Spleen (tissue), 13 donors: ENCODE measurements at regions of chr2 and their contacts with region 1.

Region 1: DNA sequence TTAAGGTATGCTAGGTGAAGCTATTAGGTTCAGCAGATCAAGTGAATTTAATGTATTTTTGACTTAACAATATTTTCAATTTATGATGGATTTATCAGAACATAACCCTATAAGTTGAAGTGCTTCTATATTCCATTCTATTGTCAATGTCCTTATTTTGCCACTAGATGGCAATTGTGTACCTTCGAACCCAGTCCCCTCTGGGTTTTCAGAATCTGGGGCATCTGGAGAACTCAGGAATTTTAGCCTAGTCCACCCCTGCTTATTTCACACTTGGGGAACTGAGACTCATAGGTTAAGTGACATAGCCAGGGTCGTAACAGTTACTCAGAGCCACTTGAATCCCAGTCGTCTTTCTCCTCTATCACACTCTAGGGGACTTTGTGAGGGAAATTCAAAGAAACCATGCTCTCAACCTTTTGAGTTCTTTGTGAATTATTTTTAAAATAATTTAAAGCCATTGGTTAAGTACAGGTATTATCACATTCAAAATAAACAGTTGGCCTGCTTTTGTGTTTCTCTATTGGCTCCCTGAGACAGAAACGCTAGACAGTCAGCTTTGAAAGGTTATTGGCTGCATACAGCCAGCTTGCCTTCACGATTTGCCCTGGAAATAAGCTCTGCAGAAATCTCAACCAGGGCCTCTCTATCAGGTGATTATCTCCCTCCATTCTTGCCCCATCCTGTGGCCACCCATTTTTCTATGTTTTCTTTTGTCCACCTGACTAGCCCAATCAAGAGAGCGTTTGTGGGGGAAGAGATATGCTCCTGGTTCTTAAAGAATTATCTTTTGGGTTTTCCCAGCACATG is 145.0 kb downstream of the TTC27 start:
- DNase-seq: no peak
- H3K4me3 ChIP-seq: no peak overlapping the region
- H3K27ac ChIP-seq: no peak overlapping the region
- H3K4me1 ChIP-seq: no peaks in the 10 kb centered on the region
- H3K27me3 ChIP-seq: no peaks in the 10 kb centered on the region
- CTCF ChIP-seq: peak in 10 of 11 experiments; percentile 26 to 65 (median 54)
- POLR2A ChIP-seq: no peak

Region 2: DNA sequence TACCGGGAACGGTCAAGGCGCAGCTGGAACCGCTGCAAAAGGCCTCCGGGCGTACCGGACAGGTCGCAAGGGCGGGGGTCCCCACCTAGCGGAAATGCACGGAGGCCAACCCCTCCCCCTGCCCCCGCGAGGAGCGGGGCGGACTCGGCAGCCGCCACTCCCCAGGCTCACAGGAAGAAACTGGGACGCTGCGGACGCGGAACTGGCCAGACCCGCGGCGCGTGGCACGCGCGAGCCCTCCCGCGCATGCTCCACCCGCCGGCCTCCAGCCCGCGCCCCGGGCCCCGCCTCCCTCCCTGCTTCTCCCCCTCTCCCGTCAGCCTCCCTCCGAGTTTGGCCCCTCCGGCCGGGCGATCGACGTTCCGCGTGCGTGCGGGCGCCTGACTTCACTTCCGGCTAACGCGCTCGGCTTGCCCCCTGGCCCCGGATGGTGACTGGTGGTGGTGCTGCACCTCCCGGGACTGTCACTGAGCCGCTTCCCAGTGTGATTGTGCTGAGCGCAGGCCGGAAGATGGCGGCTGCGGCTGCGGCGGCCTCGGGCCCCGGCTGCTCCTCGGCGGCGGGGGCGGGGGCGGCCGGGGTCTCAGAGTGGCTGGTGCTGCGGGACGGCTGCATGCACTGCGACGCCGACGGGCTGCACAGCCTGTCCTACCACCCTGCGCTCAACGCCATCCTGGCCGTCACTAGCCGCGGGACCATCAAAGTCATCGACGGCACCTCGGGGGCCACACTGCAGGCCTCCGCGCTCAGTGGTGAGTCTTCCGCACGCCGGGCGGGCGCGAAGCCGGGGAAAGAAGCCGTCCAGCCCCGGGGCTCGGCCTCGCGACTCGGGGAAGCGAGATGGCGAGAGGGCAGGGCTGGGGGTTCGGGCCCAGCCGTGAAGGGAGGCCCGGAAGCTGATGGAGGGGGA is 415.9 kb before region 1 on chr2 and contains the start of gene BIRC6:
- intact Hi-C with region 1: no loop called
- DNase-seq: peak; percentile 100
- H3K4me3 ChIP-seq: peak within 1 kb of the TSS; percentile 90 to 99 (median 96)
- H3K27ac ChIP-seq: peak within 1 kb of the TSS; percentile 97 to 99 (median 98)
- H3K4me1 ChIP-seq: peaks cover 14 to 50% (median 43%) of the 10 kb centered on the region in 6 donors
- H3K27me3 ChIP-seq: no peaks in the 10 kb centered on the region
- CTCF ChIP-seq: peak in 6 of 11 experiments; percentile 25 to 49 (median 35)
- POLR2A ChIP-seq: peak; percentile 19 to 73 (median 32)
- total RNA-seq, gene BIRC6: 138 to 226 (median 195) TPM

Region 3: GRCh38 chr2:33372940-33373553 is 600.2 kb after region 1 on chr2:
- intact Hi-C with region 1: loop called (anchors 5 kb)
- DNase-seq: no peak
- H3K4me3 ChIP-seq: no peak overlapping the region
- H3K27ac ChIP-seq: no peak overlapping the region
- H3K4me1 ChIP-seq: peaks cover 0 to 5% (median 0%) of the 10 kb centered on the region in 6 donors
- H3K27me3 ChIP-seq: peaks cover 0 to 4% (median 0%) of the 10 kb centered on the region in 7 donors
- CTCF ChIP-seq: peak; percentile 33 to 83 (median 74)
- POLR2A ChIP-seq: no peak

Region 4: GRCh38 chr2:33583194-33583938 is 810.5 kb after region 1 on chr2:
- intact Hi-C with region 1: loop called (anchors 10 kb)
- DNase-seq: no peak
- H3K4me3 ChIP-seq: no peak overlapping the region
- H3K27ac ChIP-seq: peak overlapping the region in 4 of 8 donors; percentile 1 to 30 (median 16)
- H3K4me1 ChIP-seq: peaks cover 11 to 33% (median 15%) of the 10 kb centered on the region in 6 donors
- H3K27me3 ChIP-seq: no peaks in the 10 kb centered on the region
- CTCF ChIP-seq: peak; percentile 32 to 84 (median 71)
- POLR2A ChIP-seq: no peak

Region 5: GRCh38 chr2:34025186-34025585 is 1252.3 kb after region 1 on chr2:
- intact Hi-C with region 1: no loop called
- DNase-seq: no peak
- H3K4me3 ChIP-seq: no peak overlapping the region
- H3K27ac ChIP-seq: no peak overlapping the region
- H3K4me1 ChIP-seq: no peaks in the 10 kb centered on the region
- H3K27me3 ChIP-seq: no peaks in the 10 kb centered on the region
- CTCF ChIP-seq: no peak
- POLR2A ChIP-seq: no peak